Posterior vena cava (tissue), 2 donors: ENCODE measurements at regions of chr11 and their contacts with region 1.

Region 1: DNA sequence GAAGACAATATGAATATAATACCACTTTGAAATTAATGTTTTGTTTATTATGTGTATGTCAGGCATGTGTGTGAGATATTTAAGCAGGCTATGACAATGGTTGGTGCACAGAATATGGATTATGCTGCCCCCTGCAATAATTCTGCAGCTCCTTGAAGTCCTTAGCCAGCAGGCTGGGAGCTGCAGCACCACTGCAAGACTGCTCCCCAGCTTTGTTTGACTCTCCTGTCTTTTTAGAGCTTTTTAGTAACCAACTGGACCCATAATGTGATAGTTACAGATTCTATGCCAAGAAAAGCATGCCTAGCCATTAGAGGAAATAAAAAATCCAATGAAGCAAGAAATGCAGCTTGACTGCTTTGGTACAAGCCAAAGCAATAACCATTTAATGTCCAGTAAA is 535.1 kb downstream of the TMEM135 start:
- DNase-seq: no peak

Region 2: GRCh38 chr11:87545858-87546257 is 27.0 kb before region 1 on chr11:
- intact Hi-C with region 1: loop called in 1 of 2 experiments (anchors 1 kb)
- DNase-seq: no peak